ENCODE measurements at regions of chr2 and their contacts with region 1.

Region 1: DNA sequence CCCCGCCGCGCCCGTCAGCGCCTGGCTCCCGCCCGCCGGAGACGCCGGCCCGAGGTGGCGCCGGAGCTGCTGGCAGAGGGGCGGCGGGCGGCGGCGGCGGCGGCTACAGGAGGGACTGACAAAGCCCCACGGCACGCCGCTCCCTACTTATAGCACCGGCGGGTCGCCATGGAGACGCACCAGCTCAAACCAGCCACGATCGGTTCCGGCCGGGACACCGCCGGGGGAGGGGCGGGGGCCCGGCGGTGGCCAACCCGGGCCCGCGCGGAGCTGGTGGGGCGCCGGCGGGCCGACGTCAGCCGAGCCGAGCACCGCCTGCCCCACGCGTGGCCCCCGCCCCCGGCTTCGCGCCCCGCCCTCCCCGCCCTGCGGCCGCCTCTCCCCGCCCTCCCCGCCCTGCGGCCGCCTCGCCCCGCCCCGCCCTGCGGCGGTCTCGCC is at the start of gene ODC1:
- DNase-seq: peak; percentile 98
- H3K4me3 Mint-ChIP-seq: peak within 1 kb of the TSS; percentile 90
- H3K27ac Mint-ChIP-seq: peak within 1 kb of the TSS; percentile 96
- H3K4me1 Mint-ChIP-seq: peaks cover 41% of the 10 kb centered on the region
- H3K27me3 Mint-ChIP-seq: no peaks in the 10 kb centered on the region
- total RNA-seq, gene ODC1: 267 and 273 TPM in 2 replicates

Region 2: DNA sequence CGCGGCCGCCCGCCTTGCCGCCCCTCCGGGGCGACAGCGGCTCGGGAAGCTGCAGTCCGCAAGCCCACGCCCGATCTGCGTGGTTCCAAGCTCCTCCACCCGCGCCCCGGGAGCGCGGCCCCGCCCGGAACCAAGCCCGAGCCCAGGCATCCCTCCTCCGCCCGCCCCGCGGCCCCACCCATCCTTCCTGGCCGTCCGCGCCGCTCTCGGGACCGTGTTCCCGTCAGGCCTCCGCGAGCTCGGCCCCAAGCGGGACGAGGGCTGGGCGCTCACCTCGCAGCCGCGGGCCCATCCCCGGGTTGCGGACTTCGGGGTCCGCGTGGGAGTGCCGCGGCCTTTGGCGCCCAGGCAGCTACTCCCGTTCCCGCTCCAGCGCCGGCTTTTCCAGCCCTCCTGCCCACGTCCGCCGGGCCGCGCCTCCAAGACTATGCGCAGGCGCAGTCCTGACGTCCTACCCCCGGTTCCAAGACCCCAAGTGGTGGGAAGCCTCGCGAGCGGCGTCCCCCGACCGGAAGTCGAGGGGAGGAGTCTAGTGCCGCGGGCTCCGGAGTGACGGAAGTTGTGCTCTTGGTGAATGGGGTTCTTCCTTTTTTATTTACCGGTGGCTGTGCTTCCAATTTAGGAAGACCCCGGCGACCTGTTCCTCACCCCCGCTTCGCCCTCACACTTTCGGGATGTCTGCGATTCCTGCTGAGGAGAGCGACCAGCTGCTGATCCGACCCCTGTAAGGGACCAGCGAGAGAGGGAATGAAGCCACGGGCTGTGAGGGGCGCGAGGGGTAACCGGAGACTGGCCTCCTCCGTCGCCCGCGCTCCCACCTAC is 1024.9 kb before region 1 on chr2 and contains the starts of genes CPSF3 and ITGB1BP1:
- intact Hi-C with region 1: loop called (anchors 2 kb)
- DNase-seq: peak; percentile 99
- H3K4me3 Mint-ChIP-seq: no peak within 1 kb of the TSS
- H3K27ac Mint-ChIP-seq: peak within 1 kb of the TSS; percentile 94
- H3K4me1 Mint-ChIP-seq: peaks cover 34% of the 10 kb centered on the region
- H3K27me3 Mint-ChIP-seq: no peaks in the 10 kb centered on the region
- total RNA-seq, gene CPSF3: 81.4 TPM in 2 replicates
- total RNA-seq, gene ITGB1BP1: 121 and 131 TPM in 2 replicates

Region 3: GRCh38 chr2:10079870-10080535 is 368.2 kb before region 1 on chr2 and contains the start of gene CYS1:
- intact Hi-C with region 1: loop called (anchors 5 kb)
- DNase-seq: peak; percentile 78
- H3K4me3 Mint-ChIP-seq: peak within 1 kb of the TSS; percentile 81
- H3K27ac Mint-ChIP-seq: peak within 1 kb of the TSS; percentile 75
- H3K4me1 Mint-ChIP-seq: peaks cover 30% of the 10 kb centered on the region
- H3K27me3 Mint-ChIP-seq: peaks cover 73% of the 10 kb centered on the region
- total RNA-seq, gene CYS1: 0.24 and 0.63 TPM in 2 replicates

Region 4: DNA sequence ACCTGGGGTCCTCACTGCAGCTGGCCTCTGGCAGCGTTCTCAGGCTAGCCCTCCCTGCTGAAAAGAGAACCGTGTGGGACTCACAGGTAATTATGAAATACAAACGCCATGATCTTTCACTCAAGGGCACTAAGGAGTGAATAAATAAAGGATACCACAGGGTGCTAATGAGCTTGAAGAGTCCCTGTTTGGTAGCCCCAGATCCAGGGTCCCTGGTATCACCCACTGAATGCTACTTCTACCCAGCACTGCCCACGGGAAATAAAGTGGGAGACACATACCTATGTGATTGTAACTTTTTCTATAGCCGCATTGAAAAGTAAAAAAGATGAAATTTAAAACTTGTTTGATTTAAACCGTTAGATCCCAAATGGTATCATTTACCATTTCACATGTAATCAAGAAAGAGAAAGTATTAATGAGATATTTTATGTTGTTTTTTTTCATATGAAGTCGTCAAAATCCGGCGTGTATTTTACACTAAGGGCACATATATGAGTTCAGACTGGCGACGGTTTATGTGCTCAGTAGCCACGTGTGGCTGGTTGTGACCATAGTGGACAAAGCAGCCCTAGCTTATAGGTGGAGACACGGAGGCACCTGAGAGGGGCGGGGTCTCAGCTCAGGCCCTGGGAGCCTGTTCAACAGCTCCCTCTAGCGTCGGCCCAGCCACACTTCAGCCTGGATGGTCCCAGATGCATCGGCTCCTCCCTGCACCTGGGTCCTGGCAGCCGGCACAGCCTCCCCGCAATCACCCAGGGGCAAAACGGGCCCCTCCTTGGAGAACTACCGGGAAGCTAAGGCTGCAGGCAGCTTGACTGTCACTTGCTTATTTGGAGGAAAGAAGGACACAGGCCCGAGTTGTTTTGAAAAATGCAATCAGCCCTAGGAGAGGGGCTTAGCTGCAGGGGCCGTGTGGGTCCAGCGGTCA is 39.3 kb before region 1 on chr2:
- intact Hi-C with region 1: loop called (anchors 1 kb)
- DNase-seq: peak; percentile 95
- H3K4me3 Mint-ChIP-seq: peak overlapping the region; percentile 84
- H3K27ac Mint-ChIP-seq: peak overlapping the region; percentile 96
- H3K4me1 Mint-ChIP-seq: peaks cover 46% of the 10 kb centered on the region
- H3K27me3 Mint-ChIP-seq: no peaks in the 10 kb centered on the region

Region 5: DNA sequence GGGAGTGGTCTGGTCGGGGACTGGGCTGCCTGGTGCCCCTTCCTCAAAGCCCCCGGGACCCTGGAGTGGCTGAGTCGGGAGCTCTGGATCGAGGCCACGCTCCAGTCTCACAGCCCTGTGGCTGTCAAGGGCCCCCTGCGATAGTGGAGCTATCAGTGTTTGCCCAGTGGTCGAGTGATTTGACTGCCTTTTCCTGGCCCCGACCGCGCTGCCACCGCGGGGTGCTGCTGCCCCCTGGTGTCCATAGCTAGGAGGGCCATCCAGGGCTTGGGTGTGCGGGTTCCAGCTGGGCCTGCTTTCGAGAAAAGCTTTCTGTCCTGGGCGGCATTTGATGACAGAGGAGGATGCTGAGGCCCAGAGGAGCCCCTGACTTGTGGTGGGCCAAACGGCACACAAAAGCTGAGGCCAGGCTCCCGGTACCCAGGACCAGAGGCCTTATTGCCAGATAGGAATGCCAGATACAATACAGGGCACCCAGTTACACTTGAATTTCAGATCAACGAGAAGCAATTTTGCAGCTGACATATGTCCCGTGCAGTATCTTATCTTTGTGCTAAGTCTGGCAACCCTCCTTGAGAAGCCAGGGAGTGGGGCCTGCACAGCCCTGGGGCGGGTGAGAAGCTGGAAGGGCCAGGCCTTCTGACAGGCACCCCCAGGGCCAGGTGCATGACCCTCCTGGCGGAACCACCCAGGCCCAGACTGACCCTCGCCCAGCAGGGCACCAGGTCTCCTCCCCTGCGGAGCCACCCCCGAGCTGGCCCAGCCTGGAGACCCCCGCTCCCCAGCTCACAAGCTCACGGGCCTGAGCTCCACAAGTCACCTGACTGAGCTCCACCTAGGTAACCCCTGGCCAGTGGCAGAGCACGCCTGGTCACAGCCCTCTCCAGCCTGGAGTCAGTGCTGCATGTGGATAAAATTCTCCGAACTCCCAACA is 13.1 kb before region 1 on chr2:
- intact Hi-C with region 1: no loop called
- DNase-seq: peak; percentile 94
- H3K4me3 Mint-ChIP-seq: peak overlapping the region; percentile 23
- H3K27ac Mint-ChIP-seq: no peak overlapping the region
- H3K4me1 Mint-ChIP-seq: peaks cover 12% of the 10 kb centered on the region
- H3K27me3 Mint-ChIP-seq: peaks cover 4% of the 10 kb centered on the region

Region 6: DNA sequence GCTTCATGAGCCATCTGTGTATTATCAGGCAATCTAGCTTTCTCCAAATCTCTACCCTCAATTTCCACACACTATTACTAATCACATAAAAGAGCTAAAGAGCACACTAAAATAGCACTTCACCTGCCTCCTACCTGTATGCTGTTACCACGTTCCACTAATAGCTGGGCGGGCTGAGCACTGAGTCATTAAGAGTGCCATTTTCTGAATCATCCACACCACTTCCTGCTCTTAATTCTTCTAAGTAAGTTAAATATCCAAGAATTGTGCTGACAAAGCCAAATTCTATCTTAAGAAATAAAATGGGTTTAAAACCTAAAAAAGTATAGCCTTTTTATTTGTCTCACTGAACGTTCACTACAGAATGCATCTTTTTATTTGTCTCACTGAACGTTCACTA is 205.8 kb after region 1 on chr2:
- intact Hi-C with region 1: loop called (anchors 1 kb)
- DNase-seq: peak; percentile 78
- H3K4me3 Mint-ChIP-seq: peak overlapping the region; percentile 72
- H3K27ac Mint-ChIP-seq: peak overlapping the region; percentile 81
- H3K4me1 Mint-ChIP-seq: peaks cover 47% of the 10 kb centered on the region
- H3K27me3 Mint-ChIP-seq: no peaks in the 10 kb centered on the region